ENCODE measurements at regions of chr10 and their contacts with region 1.

Region 1: GRCh38 chr10:121974535-121975294 is at the start of gene NSMCE4A:
- DNase-seq: peak; percentile 88
- H3K27ac ChIP-seq: peak within 1 kb of the TSS; percentile 96
- CTCF ChIP-seq: no peak

Region 2: GRCh38 chr10:121910673-121911420 is 63.9 kb before region 1 on chr10:
- CTCF ChIA-PET with region 1: no interaction called
- POLR2A ChIA-PET with region 1: no interaction called
- DNase-seq: no peak
- H3K27ac ChIP-seq: no peak overlapping the region
- CTCF ChIP-seq: no peak

Region 3: GRCh38 chr10:121961456-121961855 is 13.3 kb before region 1 on chr10:
- CTCF ChIA-PET with region 1: interaction called, 10 read pairs
- POLR2A ChIA-PET with region 1: no interaction called
- DNase-seq: no peak
- H3K27ac ChIP-seq: no peak overlapping the region
- CTCF ChIP-seq: no peak

Measured in RWPE1 (cell line).